Dorsolateral prefrontal cortex (tissue), 120 donors: ENCODE measurements at regions of chr10 and their contacts with region 1.

Region 1: GRCh38 chr10:31808258-31809218 is 120.1 kb downstream of the ARHGAP12 start:
- DNase-seq: peak in 2 of 10 donors; percentile 11 to 25
- H3K4me3 ChIP-seq: peak overlapping the region in 57 of 59 donors; percentile 0 to 63 (median 42)
- H3K27ac ChIP-seq: peak overlapping the region in 52 of 59 donors; percentile 2 to 85 (median 69)
- H3K27me3 ChIP-seq: no peaks in the 10 kb centered on the region
- CTCF ChIP-seq: peak; percentile 67 to 95 (median 81)

Region 2: GRCh38 chr10:30727524-30727923 is 1081.0 kb before region 1 on chr10:
- intact Hi-C with region 1: loop called (anchors 5 kb)
- DNase-seq: no peak
- H3K4me3 ChIP-seq: no peak overlapping the region
- H3K27ac ChIP-seq: no peak overlapping the region
- H3K27me3 ChIP-seq: no peaks in the 10 kb centered on the region
- CTCF ChIP-seq: no peak

Region 3: DNA sequence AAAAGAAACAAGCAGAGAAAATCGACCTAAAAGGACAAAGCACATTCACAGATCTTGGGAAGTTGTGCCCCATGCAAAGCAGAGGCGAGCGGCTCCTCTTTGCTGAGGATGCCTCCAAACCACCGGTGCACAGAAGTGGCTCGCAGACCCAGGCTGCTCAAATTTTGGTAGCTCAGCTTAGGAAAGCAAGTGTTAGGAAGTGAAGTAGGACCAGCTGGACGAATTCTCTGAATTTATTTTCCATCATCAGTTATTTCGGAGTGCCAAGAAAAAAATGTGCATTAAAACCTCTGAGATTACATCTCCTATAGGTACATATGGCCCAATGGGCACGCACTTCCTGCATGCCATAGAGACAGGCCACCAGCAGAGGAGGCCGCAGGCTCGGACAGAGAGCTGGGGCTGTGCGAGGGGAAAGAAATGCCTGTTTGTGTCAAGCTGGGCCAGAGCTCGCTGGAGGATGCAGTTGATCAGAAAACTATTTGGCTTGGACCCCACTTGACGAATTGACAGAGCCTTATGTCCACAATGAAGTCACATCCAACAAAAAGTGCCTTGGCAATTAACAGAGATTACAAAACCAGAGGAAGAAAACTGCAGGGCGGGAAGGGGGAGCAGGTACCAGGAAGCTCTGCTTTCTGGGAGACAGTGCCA is 1056.7 kb before region 1 on chr10:
- intact Hi-C with region 1: loop called in 1 of 2 experiments (anchors 2 kb)
- DNase-seq: peak; percentile 14 to 92 (median 81)
- H3K4me3 ChIP-seq: peak overlapping the region in 9 of 59 donors; percentile 4 to 38 (median 11)
- H3K27ac ChIP-seq: peak overlapping the region; percentile 10 to 95 (median 82)
- H3K27me3 ChIP-seq: no peaks in the 10 kb centered on the region
- CTCF ChIP-seq: peak; percentile 51 to 99 (median 89)

Region 4: GRCh38 chr10:31603235-31604087 is 205.1 kb before region 1 on chr10:
- intact Hi-C with region 1: loop called in 1 of 2 experiments (anchors 10 kb)
- DNase-seq: peak; percentile 28 to 89 (median 74)
- H3K4me3 ChIP-seq: peak overlapping the region; percentile 41 to 97 (median 79)
- H3K27ac ChIP-seq: peak overlapping the region in 56 of 59 donors; percentile 3 to 86 (median 72)
- H3K27me3 ChIP-seq: no peaks in the 10 kb centered on the region
- CTCF ChIP-seq: peak in 3 of 56 donors; percentile 14 to 19 (median 16)

Region 5: DNA sequence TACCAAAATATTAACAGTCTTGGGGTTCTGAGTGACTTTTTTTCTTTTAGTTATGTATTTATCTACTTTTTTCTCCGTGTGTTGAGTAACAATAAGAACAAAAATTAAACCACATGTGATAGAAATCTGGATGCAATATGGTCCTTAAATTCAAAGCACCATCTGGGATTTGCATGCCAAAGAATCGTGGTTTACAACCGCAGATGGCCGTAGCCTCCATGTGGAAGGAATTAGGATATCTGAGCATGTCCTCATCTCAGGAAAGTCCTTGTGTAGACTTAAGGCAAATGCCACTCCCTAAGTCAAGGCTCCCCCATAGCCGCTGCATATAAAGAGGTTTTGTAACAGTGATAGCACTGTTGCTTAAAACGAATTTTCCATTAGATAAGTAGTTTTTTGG is 185.6 kb before region 1 on chr10:
- intact Hi-C with region 1: no loop called
- DNase-seq: no peak
- H3K4me3 ChIP-seq: no peak overlapping the region
- H3K27ac ChIP-seq: no peak overlapping the region
- H3K27me3 ChIP-seq: peaks cover 0 to 3% (median 0%) of the 10 kb centered on the region in 45 donors
- CTCF ChIP-seq: no peak

Region 6: GRCh38 chr10:31723106-31723750 is 85.3 kb before region 1 on chr10:
- intact Hi-C with region 1: no loop called
- DNase-seq: no peak
- H3K4me3 ChIP-seq: no peak overlapping the region
- H3K27ac ChIP-seq: peak overlapping the region in 16 of 59 donors; percentile 0 to 64 (median 22)
- H3K27me3 ChIP-seq: no peaks in the 10 kb centered on the region
- CTCF ChIP-seq: no peak